ENCODE measurements at regions of chr17 and their contacts with region 1.

Region 1: GRCh38 chr17:7351665-7352501 is at the start of gene KCTD11:
- DNase-seq: peak; percentile 91 to 95 (median 95)
- ATAC-seq: peak; percentile 45 to 81 (median 72)
- H3K4me3 ChIP-seq: peak within 1 kb of the TSS; percentile 49 to 98 (median 87)
- H3K27ac ChIP-seq: peak within 1 kb of the TSS; percentile 95 to 100 (median 97)
- H3K4me1 ChIP-seq: peaks cover 0 to 67% (median 38%) of the 10 kb centered on the region in 12 donors
- H3K27me3 ChIP-seq: no peaks in the 10 kb centered on the region
- CTCF ChIP-seq: peak in 7 of 12 donors; percentile 31 to 67 (median 49)
- POLR2A ChIP-seq: peak in 1 of 2 donors; percentile 80
- total RNA-seq, gene KCTD11: 3.4 to 9.0 (median 5.9) TPM

Region 2: DNA sequence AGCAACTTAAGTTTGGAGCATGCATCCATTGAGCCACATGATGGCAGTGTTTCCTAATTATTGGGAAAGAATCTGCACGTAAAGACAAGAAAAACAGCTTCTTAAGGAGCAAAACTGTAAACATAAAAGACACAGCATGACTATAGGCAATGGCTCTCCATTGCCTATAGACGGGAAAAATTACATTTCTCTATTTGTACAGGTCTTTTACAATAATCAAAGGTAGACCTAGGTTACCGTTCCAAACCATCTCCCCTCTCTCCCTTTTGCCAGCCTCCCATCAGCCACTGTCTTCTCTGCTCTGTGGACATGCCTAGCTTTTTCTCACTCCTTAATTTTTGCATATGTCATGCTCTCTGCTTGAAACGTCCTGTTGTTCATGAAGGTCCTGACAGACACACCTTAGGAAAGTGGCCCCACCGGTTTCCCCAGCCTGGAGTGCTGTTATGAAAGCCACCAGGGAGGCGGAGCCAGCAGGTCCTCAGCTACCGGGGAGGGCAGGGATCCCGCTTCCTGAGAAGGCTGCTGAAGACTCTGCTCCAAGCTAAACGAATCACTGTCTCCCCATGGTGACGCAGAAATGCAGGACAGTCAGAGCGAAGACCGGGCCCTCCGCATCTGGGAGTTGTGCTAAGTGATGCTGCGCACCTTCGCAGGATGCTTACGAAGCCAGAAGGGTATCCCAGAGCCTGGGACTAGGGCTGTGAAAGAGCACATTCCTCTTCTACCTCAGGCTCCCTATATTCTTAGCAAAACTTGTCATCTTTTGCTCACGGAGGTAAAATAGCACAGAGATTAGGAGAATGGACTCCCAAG is 305.8 kb before region 1 on chr17:
- intact Hi-C with region 1: loop called in 1 of 10 experiments (anchors 5 kb)
- DNase-seq: no peak
- ATAC-seq: peak in 2 of 4 donors; percentile 31 to 48
- H3K4me3 ChIP-seq: peak overlapping the region in 9 of 12 donors; percentile 22 to 46 (median 26)
- H3K27ac ChIP-seq: peak overlapping the region in 2 of 12 donors; percentile 24 to 68
- H3K4me1 ChIP-seq: peaks cover 0 to 41% (median 28%) of the 10 kb centered on the region in 12 donors
- H3K27me3 ChIP-seq: peaks cover 0 to 43% (median 21%) of the 10 kb centered on the region in 9 donors
- CTCF ChIP-seq: peak; percentile 65 to 89 (median 80)
- POLR2A ChIP-seq: no peak

Region 3: DNA sequence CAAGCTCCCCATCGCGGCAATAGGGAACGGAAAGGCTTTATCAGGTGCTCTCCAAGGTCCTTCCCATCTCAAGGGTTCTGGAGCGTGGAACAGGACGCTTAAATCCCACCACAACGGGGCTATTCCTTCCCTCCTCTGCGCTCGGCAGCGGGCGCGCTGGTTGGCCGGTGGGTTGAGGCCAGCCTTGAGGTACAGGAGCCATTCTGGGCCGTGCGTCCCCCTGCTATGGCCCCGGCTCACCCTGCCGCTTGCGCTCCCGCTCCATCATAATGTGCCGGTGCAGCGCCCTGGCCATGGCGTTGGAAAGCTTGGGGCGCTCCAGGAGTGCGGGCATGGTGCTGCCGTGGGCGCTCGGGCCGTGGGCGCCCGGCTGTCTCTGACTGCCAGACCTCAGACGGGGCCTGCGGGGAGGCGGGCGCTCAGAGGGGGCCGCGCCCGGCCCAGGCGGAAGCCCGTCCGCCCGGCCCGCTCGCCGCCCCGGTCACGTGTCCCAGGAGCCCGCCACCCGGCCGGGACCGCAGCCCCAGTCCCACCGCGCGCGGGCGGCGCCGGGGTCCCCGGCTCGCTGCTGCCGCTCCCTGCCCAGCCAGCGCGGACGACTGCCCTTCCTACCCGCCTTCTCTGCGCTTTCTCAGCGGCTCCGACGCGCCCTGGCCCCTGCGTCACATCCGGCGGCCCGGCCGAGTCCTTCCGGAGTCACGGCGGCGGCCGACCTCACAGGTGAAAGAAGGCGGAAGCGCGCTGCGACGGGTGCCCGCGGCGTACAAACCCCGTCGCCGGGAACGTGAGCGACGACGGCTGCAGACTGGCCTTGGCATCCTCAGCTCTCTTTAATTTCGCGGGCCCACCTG is 36.9 kb before region 1 on chr17 and contains the start of gene GPS2:
- intact Hi-C with region 1: no loop called
- DNase-seq: peak; percentile 93 to 97 (median 94)
- ATAC-seq: peak; percentile 78 to 91 (median 89)
- H3K4me3 ChIP-seq: peak within 1 kb of the TSS; percentile 76 to 98 (median 92)
- H3K27ac ChIP-seq: peak within 1 kb of the TSS; percentile 90 to 99 (median 96)
- H3K4me1 ChIP-seq: peaks cover 3 to 51% (median 36%) of the 10 kb centered on the region in 12 donors
- H3K27me3 ChIP-seq: no peaks in the 10 kb centered on the region
- CTCF ChIP-seq: no peak
- POLR2A ChIP-seq: peak; percentile 26 to 87
- total RNA-seq, gene GPS2: 51.0 to 118 (median 61.2) TPM

Region 4: DNA sequence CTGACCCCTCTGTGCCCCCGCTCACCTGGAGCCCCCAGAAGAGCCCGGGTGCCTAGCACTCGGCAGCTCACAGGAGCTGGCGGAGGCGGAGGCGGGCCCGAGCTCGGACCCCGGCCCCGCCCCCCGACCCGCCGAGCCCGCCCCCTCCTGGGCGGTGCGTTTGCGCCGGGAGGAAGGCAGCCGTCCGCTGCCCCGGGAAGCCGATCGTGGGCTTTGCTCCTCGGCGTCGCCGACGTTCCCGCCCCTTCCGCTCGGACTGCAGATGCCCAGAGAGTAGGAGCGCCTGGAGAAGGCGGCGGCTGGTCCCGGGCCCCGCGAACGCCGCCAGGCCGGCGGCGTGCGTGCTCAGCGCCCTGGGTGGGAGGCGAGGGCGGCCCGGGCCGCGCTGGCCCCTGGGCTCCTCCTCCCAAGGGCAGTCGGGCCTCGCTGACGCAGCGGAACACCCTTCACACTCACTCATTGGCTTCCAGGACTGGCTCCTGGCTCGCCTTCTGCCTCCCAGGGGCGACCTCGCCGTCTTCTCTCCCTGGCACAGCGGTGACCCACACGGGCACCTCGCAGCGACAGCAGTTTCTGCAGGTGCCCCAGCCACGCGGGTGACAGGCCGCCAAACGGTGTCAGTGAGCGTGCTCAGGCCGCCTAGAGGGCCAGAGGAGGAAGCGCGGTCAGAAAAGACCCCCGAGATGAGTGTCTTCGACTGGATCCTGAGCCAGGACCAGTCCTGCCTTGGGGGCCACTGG is 42.7 kb after region 1 on chr17 and contains the start of gene PLSCR3:
- intact Hi-C with region 1: loop called in 5 of 10 experiments (anchors 2 to 5 kb)
- DNase-seq: peak; percentile 88 to 94 (median 93)
- ATAC-seq: peak; percentile 75 to 94 (median 93)
- H3K4me3 ChIP-seq: peak within 1 kb of the TSS; percentile 76 to 96 (median 86)
- H3K27ac ChIP-seq: peak within 1 kb of the TSS; percentile 88 to 99 (median 96)
- H3K4me1 ChIP-seq: peaks cover 0 to 27% (median 17%) of the 10 kb centered on the region in 12 donors
- H3K27me3 ChIP-seq: no peaks in the 10 kb centered on the region
- CTCF ChIP-seq: peak in 8 of 12 donors; percentile 9 to 45 (median 31)
- POLR2A ChIP-seq: peak; percentile 50 to 93
- total RNA-seq, gene PLSCR3: 14.3 to 29.5 (median 16.4) TPM

Region 5: DNA sequence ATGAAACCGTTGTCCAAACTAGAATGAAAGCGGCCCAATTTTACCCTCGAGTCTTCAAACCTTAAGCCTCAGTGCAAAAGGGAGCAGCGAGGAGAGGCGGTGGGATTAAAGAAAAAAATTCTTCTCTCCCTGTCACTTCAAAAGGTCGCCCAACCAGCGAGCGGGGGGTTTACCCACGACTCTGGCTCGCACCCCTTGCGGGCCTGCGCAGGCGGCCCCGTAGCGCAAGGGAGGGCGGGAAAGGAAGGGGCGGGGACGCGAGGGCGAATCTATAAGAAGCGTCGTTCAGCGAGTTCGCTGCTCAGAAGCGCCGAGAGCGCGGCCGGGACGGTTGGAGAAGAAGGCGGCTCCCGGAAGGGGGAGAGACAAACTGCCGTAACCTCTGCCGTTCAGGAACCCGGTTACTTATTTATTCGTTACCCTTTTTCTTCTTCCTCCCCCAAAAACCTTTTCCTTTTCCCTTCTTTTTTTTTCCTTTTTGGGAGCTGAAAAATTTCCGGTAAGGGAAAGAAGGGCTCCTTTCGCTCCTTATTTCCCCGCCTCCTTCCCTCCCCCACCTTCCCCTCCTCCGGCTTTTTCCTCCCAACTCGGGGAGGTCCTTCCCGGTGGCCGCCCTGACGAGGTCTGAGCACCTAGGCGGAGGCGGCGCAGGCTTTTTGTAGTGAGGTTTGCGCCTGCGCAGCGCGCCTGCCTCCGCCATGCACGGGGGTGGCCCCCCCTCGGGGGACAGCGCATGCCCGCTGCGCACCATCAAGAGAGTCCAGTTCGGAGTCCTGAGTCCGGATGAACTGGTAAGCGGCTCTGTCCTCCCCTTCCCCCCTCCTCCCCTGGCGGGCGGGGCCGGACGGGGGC is 132.4 kb after region 1 on chr17 and contains the start of gene POLR2A:
- intact Hi-C with region 1: loop called in 5 of 10 experiments (anchors 2 to 10 kb)
- DNase-seq: peak; percentile 98 to 99 (median 99)
- ATAC-seq: peak; percentile 84 to 90 (median 87)
- H3K4me3 ChIP-seq: peak within 1 kb of the TSS; percentile 35 to 85 (median 72)
- H3K27ac ChIP-seq: peak within 1 kb of the TSS; percentile 94 to 100 (median 100)
- H3K4me1 ChIP-seq: peaks cover 8 to 76% (median 55%) of the 10 kb centered on the region in 12 donors
- H3K27me3 ChIP-seq: no peaks in the 10 kb centered on the region
- CTCF ChIP-seq: peak in 1 of 12 donors; percentile 4
- POLR2A ChIP-seq: peak; percentile 99 to 100
- total RNA-seq, gene POLR2A: 31.4 to 77.6 (median 50.7) TPM

Region 6: GRCh38 chr17:7561028-7561575 is 209.2 kb after region 1 on chr17:
- intact Hi-C with region 1: loop called in 7 of 10 experiments (anchors 2 to 10 kb)
- DNase-seq: peak; percentile 90 to 94 (median 92)
- ATAC-seq: peak; percentile 67 to 80 (median 77)
- H3K4me3 ChIP-seq: peak overlapping the region; percentile 58 to 98 (median 93)
- H3K27ac ChIP-seq: peak overlapping the region; percentile 80 to 98 (median 94)
- H3K4me1 ChIP-seq: peaks cover 11 to 75% (median 57%) of the 10 kb centered on the region in 12 donors
- H3K27me3 ChIP-seq: no peaks in the 10 kb centered on the region
- CTCF ChIP-seq: peak; percentile 78 to 90 (median 86)
- POLR2A ChIP-seq: no peak

Region 7: GRCh38 chr17:7687908-7688807 is 336.3 kb after region 1 on chr17 and contains the start of gene WRAP53:
- intact Hi-C with region 1: loop called in 1 of 10 experiments (anchors 10 kb)
- DNase-seq: peak; percentile 96 to 99 (median 97)
- ATAC-seq: peak; percentile 92 to 97 (median 94)
- H3K4me3 ChIP-seq: peak within 1 kb of the TSS; percentile 67 to 97 (median 86)
- H3K27ac ChIP-seq: peak within 1 kb of the TSS; percentile 47 to 99 (median 95)
- H3K4me1 ChIP-seq: peaks cover 0 to 37% (median 24%) of the 10 kb centered on the region in 12 donors
- H3K27me3 ChIP-seq: no peaks in the 10 kb centered on the region
- CTCF ChIP-seq: peak; percentile 98 to 100 (median 99)
- POLR2A ChIP-seq: peak in 1 of 2 donors; percentile 64
- total RNA-seq, gene WRAP53: 3.7 to 9.8 (median 4.8) TPM

Measured in heart left ventricle (tissue), 16 donors.